ENCODE measurements at regions of chr6 and their contacts with region 1.

Region 1: GRCh38 chr6:79949233-79949632 is 1.9 kb upstream of the ELOVL4 start:
- H3K4me3 ChIP-seq: peak overlapping the region; percentile 23; the same call in 1 of the 2 replicates
- H3K27ac ChIP-seq: no peak overlapping the region
- H3K4me1 ChIP-seq: peaks cover 7% of the 10 kb centered on the region; the same call in 1 of the 2 replicates
- CTCF ChIP-seq: peak; percentile 58; the same call in 1 of the 2 replicates

Region 2: GRCh38 chr6:79813854-79814709 is 135.2 kb before region 1 on chr6:
- CTCF ChIA-PET with region 1: no interaction called
- POLR2A ChIA-PET with region 1: no interaction called
- H3K4me3 ChIP-seq: no peak overlapping the region
- H3K27ac ChIP-seq: no peak overlapping the region
- H3K4me1 ChIP-seq: no peaks in the 10 kb centered on the region
- CTCF ChIP-seq: peak; percentile 53

Region 3: GRCh38 chr6:79869600-79870084 is 79.6 kb before region 1 on chr6:
- CTCF ChIA-PET with region 1: interaction called, 11 read pairs
- POLR2A ChIA-PET with region 1: interaction called, 3 read pairs
- H3K4me3 ChIP-seq: no peak overlapping the region
- H3K27ac ChIP-seq: no peak overlapping the region
- H3K4me1 ChIP-seq: no peaks in the 10 kb centered on the region
- CTCF ChIP-seq: peak; percentile 86

Region 4: GRCh38 chr6:79964607-79965081 is 15.4 kb after region 1 on chr6:
- CTCF ChIA-PET with region 1: interaction called, 17 read pairs
- POLR2A ChIA-PET with region 1: no interaction called
- H3K4me3 ChIP-seq: no peak overlapping the region
- H3K27ac ChIP-seq: no peak overlapping the region
- H3K4me1 ChIP-seq: no peaks in the 10 kb centered on the region
- CTCF ChIP-seq: no peak

Region 5: DNA sequence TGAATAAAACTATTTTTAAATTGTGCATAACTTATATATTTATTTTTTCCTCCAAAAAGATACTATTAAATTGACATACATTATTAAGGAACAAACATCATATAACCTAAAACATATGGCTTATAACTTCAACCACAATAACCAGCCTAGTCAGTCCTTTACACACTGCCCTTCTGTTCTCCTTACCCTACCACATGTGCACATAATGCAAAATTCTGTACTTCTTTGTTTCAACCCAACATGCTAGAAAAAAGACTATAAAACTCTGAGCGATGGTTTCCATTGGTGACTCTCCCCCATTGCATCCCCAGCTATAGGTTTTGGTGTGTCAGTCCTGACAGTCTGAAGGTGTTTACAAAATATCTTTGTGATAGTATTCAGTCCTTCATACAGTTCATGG is 40.4 kb after region 1 on chr6:
- CTCF ChIA-PET with region 1: interaction called, 7 read pairs
- POLR2A ChIA-PET with region 1: interaction called, 11 read pairs
- H3K4me3 ChIP-seq: no peak overlapping the region
- H3K27ac ChIP-seq: no peak overlapping the region
- H3K4me1 ChIP-seq: no peaks in the 10 kb centered on the region
- CTCF ChIP-seq: no peak

Region 6: DNA sequence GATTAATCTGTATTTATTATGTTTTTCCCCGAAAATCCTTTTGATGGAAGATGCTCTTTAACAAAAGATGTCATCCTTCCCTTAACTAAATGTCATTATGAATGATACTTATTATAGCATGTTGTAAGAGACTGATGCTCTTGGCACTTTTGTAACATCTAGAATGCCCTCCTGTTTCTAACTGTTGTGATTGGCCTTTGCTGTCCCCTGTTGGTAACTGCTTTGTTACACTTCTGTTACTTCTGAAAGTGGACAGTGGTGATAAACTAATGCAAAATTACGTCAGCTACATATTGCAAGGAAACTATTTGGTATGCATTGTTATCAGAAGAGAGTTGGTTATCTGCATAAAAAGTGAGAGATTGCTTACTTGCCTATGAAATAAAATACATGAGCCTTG is 61.1 kb after region 1 on chr6:
- CTCF ChIA-PET with region 1: interaction called, 11 read pairs
- POLR2A ChIA-PET with region 1: no interaction called
- H3K4me3 ChIP-seq: no peak overlapping the region
- H3K27ac ChIP-seq: no peak overlapping the region
- H3K4me1 ChIP-seq: no peaks in the 10 kb centered on the region
- CTCF ChIP-seq: no peak

Region 7: GRCh38 chr6:80094017-80094416 is 144.8 kb after region 1 on chr6:
- CTCF ChIA-PET with region 1: interaction called, 72 read pairs
- POLR2A ChIA-PET with region 1: no interaction called
- H3K4me3 ChIP-seq: no peak overlapping the region
- H3K27ac ChIP-seq: no peak overlapping the region
- H3K4me1 ChIP-seq: no peaks in the 10 kb centered on the region
- CTCF ChIP-seq: no peak